Heart right ventricle (tissue), 16 donors: ENCODE measurements at regions of chr1 and their contacts with region 1.

Region 1: DNA sequence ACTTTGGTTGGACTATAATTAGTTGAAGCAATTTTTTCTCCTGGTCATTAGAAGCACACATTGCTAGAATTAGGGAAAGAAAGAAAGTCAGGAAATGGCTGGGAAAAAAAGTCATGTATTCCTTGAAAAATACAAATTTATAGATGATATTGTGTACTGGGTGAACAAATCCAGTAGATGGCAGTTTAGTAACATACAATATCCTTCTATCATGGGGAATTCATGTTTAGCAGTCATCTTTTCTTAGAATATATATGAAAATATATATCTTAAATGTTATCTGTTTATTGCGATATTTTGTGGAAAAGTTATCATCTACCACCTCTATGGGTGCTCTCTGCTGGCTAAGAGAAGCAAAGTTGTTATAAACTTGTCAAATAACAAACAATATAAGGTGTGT is 13.1 kb upstream of the ZRANB2 start:
- DNase-seq: no peak
- ATAC-seq: no peak
- H3K4me3 ChIP-seq: no peak overlapping the region
- H3K27ac ChIP-seq: no peak overlapping the region
- H3K4me1 ChIP-seq: no peaks in the 10 kb centered on the region
- H3K27me3 ChIP-seq: no peaks in the 10 kb centered on the region
- CTCF ChIP-seq: peak in 7 of 9 donors; percentile 20 to 54 (median 42)

Region 2: GRCh38 chr1:70930062-70930461 is 163.9 kb before region 1 on chr1:
- intact Hi-C with region 1: no loop called
- DNase-seq: no peak
- ATAC-seq: no peak
- H3K4me3 ChIP-seq: no peak overlapping the region
- H3K27ac ChIP-seq: no peak overlapping the region
- H3K4me1 ChIP-seq: no peaks in the 10 kb centered on the region
- H3K27me3 ChIP-seq: no peaks in the 10 kb centered on the region
- CTCF ChIP-seq: no peak

Region 3: GRCh38 chr1:71533950-71534349 is 440.0 kb after region 1 on chr1:
- intact Hi-C with region 1: loop called in 4 of 10 experiments (anchors 10 kb)
- DNase-seq: no peak
- ATAC-seq: no peak
- H3K4me3 ChIP-seq: no peak overlapping the region
- H3K27ac ChIP-seq: no peak overlapping the region
- H3K4me1 ChIP-seq: no peaks in the 10 kb centered on the region
- H3K27me3 ChIP-seq: no peaks in the 10 kb centered on the region
- CTCF ChIP-seq: no peak